WTC11 (cell line): ENCODE measurements at regions of chr1 and their contacts with region 1.

Region 1: GRCh38 chr1:211698161-211699026 is 23.0 kb upstream of the NEK2 start:
- DNase-seq: peak; percentile 91
- ATAC-seq: peak; percentile 95
- H3K4me3 Mint-ChIP-seq: peak overlapping the region; percentile 80
- H3K27ac Mint-ChIP-seq: no peak overlapping the region
- H3K4me1 Mint-ChIP-seq: peaks cover 4% of the 10 kb centered on the region; the same call in 1 of the 2 replicates
- H3K27me3 Mint-ChIP-seq: peaks cover 31% of the 10 kb centered on the region
- CTCF ChIP-seq: peak; percentile 99

Region 2: DNA sequence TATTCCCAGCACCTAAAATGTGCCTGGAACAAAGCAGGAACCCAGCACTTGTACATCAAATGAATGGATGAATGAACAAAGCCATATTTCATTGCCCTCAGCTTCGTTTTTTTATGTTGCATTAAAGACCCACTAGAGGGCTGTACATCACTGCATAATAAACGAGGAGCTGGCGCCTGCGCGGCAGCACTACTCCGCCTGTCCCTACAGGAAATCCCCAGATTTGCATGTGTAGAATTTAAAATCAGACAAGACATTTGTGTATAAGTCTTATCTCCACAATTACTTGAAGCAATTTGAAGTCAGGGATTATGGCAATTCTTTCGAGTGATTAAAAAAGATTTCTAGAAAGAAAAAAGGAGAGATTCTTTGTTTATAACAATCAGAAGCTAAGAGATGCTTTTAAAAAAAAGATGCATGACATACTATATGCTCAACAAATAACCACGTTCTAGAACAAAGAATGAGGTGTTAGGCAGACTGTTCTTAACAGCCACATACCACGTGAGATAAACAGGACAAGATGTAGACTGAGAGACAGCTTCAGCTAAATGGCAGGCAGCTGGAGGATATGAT is 17.6 kb before region 1 on chr1:
- CTCF ChIA-PET with region 1: interaction called, 40 read pairs
- POLR2A ChIA-PET with region 1: no interaction called
- DNase-seq: peak; percentile 46
- ATAC-seq: peak; percentile 57
- H3K4me3 Mint-ChIP-seq: no peak overlapping the region
- H3K27ac Mint-ChIP-seq: no peak overlapping the region
- H3K4me1 Mint-ChIP-seq: peaks cover 10% of the 10 kb centered on the region
- H3K27me3 Mint-ChIP-seq: no peaks in the 10 kb centered on the region
- CTCF ChIP-seq: peak; percentile 22; the same call in 1 of the 2 replicates

Region 3: DNA sequence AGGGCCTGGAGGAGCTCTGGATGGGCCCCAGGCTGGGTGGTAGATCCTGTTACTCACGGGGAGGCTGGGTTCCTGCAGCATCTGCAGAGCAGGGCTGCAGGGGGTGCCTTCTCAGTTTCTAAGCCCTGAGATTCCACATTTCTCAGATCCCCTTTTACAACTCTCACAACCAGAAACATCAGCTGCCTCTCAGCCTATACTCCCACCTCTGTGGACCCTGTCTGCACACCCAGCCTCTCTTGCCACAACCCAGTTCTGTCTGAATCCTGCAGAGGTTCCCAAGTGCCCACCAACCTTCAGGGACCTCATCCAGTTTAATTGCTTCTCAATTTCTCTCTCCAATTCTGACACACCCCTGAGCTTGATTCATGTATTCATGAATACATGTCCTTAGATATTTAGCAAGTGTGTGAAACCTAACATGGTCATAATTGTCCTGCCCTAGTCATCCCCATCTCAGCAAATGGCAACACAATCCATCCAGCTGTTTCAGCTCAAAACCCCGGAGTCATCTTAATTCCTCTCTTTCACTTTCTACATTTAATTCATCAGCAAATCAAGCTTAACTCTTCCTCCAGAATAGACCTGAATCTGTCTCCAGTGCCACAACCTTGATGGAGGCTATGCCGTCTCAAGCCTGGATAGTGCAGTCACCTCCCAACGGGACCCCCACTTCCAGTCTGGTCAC is 34.0 kb after region 1 on chr1:
- CTCF ChIA-PET with region 1: interaction called, 13 read pairs
- POLR2A ChIA-PET with region 1: no interaction called
- DNase-seq: no peak
- ATAC-seq: no peak
- H3K4me3 Mint-ChIP-seq: no peak overlapping the region
- H3K27ac Mint-ChIP-seq: no peak overlapping the region
- H3K4me1 Mint-ChIP-seq: peaks cover 8% of the 10 kb centered on the region
- H3K27me3 Mint-ChIP-seq: no peaks in the 10 kb centered on the region
- CTCF ChIP-seq: no peak

Region 4: DNA sequence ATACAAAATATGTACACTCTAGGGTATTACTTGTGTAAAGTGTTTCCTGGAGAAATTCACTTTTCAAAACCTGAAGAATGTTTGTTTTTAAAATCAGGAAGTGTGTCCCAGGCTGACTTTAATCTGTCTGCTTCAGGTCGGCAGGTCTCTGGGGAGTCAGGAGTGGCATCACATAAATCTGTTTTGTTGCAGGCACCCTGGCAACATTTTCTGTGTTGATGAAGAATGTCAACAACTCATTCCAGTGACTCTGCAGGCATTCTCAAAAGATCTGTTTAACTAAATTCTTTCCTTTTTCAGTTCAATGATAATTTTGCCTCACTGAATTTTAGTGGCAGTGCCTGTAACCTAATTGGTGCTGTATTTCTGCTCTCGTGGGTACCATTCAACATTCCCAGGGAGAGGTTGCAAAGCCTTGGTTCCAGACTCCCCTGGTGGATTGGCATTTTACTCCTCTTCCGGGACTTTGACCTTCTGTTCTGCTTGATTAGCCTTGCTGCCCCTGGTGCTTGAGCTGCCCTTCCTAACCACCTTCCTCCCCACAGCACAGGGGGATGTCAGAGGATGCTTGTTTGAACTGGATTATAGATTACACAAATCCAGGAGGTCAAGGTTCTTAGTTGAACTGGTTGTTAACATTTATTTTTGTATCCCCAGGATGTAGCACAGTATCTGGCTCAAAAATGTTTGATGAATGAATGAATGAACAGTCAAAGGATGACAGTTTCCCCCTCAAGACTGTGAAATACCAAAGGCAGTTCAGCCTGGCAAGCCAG is 187.5 kb after region 1 on chr1:
- CTCF ChIA-PET with region 1: interaction called, 15 read pairs
- POLR2A ChIA-PET with region 1: interaction called, 3 read pairs
- DNase-seq: no peak
- ATAC-seq: no peak
- H3K4me3 Mint-ChIP-seq: no peak overlapping the region
- H3K27ac Mint-ChIP-seq: no peak overlapping the region
- H3K4me1 Mint-ChIP-seq: peaks cover 3% of the 10 kb centered on the region
- H3K27me3 Mint-ChIP-seq: peaks cover 23% of the 10 kb centered on the region
- CTCF ChIP-seq: no peak

Region 5: GRCh38 chr1:211944733-211945500 is 246.5 kb after region 1 on chr1:
- CTCF ChIA-PET with region 1: interaction called, 27 read pairs
- POLR2A ChIA-PET with region 1: no interaction called
- DNase-seq: peak; percentile 55
- ATAC-seq: peak; percentile 86
- H3K4me3 Mint-ChIP-seq: no peak overlapping the region
- H3K27ac Mint-ChIP-seq: no peak overlapping the region
- H3K4me1 Mint-ChIP-seq: peaks cover 25% of the 10 kb centered on the region
- H3K27me3 Mint-ChIP-seq: no peaks in the 10 kb centered on the region; the same call in none of the 2 replicates
- CTCF ChIP-seq: no peak